GM12878 (cell line): ENCODE measurements at regions of chr6 and their contacts with region 1.

Region 1: DNA sequence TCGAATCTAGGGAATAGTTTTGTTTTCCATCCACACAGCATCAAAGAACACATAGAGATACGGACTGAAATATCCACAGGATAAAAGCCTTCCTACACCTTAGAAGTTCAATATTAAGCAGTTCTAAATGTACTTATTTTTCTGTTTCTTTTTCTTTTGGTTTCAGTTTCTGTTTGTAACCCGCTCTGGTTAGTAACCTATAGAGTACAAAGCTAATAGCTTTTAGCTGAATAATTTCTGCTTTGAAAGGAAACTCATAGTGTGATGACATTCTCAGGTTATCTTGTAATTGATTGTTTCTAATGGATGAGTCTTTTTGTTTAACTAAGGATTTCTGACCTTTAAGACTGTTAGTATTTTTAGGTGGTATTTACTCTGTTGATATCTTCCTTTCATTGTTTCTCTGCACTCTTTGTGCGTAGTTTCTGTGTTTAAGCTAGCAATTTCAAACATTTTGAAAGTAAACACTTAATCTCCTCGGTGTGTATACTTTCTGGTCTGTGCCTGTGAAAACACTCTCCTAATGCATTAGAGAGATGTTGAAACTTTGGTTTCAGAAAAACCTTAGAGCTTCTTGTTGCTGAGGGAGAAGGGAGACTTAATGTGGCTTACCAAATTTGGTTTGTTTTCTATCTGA is 385.5 kb downstream of the HDGFL1 start:
- DNase-seq: no peak
- ATAC-seq: peak; percentile 80
- H3K4me3 ChIP-seq: peak overlapping the region; percentile 41; the same call in 1 of the 2 replicates
- H3K27ac ChIP-seq: peak overlapping the region; percentile 24; the same call in 1 of the 2 replicates
- H3K4me1 ChIP-seq: no peaks in the 10 kb centered on the region
- H3K27me3 ChIP-seq: no peaks in the 10 kb centered on the region
- CTCF ChIP-seq: no peak
- EP300 ChIP-seq: no peak
- POLR2A ChIP-seq: no peak
- RAD21 ChIP-seq: no peak

Region 2: DNA sequence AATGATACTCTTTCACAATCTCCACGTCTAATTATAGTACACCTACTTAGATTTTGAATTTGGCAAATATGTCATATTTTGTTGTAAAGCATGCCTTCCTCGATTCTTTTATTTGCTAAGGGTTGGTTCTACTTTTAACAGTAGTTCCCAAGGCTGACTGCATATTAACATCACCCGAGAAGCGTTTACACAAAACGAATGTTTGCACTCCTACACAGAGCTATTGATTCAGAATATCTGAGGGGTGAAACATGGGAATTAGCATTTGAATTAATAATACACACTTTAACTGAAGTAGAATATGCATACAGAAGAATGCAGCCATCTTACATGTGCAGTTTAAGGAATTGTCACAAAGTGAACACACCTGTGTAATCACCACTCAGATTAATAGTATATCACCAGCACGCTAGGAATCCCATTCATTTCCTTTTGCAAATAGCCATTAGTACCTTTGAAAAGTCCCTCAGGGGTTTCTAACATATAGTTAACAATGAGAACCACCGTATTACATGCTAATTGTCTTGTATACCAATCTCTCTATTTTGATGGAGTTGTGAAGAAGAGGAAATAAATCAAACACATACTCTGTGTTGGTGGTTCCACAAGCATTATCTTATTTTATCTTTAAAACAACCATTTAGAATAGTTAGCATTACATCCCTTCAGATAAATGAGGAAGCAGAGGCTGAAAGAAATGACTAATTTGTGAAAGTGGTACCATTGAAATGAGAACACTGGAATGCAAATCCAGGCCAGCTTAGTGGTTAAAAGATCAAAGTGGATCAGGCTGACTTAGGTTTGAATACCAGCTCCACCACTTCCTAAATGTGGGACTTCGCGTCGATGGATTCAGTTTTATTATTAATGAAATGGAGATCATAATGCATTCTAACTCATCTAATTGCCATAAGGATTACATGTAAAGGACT is 68.0 kb before region 1 on chr6:
- CTCF ChIA-PET with region 1: no interaction called
- POLR2A ChIA-PET with region 1: no interaction called
- RAD21 ChIA-PET with region 1: interaction called, 10 read pairs
- SMC1A ChIA-PET with region 1: interaction called, 5 read pairs
- in situ Hi-C with region 1: no loop called
- intact Hi-C with region 1: no loop called
- DNase-seq: peak; percentile 30
- ATAC-seq: peak; percentile 74
- H3K4me3 ChIP-seq: no peak overlapping the region
- H3K27ac ChIP-seq: no peak overlapping the region
- H3K4me1 ChIP-seq: no peaks in the 10 kb centered on the region
- H3K27me3 ChIP-seq: no peaks in the 10 kb centered on the region
- CTCF ChIP-seq: no peak
- EP300 ChIP-seq: peak; percentile 44 to 86; a peak in 2 of 4 replicates
- POLR2A ChIP-seq: no peak
- RAD21 ChIP-seq: no peak

Region 3: GRCh38 chr6:22966691-22967422 is 12.0 kb after region 1 on chr6:
- CTCF ChIA-PET with region 1: interaction called, 5 read pairs
- POLR2A ChIA-PET with region 1: interaction called, 6 read pairs
- RAD21 ChIA-PET with region 1: interaction called, 5 read pairs
- SMC1A ChIA-PET with region 1: interaction called, 32 read pairs
- in situ Hi-C with region 1: no loop called
- intact Hi-C with region 1: no loop called
- DNase-seq: no peak
- ATAC-seq: no peak
- H3K4me3 ChIP-seq: no peak overlapping the region
- H3K27ac ChIP-seq: no peak overlapping the region
- H3K4me1 ChIP-seq: no peaks in the 10 kb centered on the region
- H3K27me3 ChIP-seq: no peaks in the 10 kb centered on the region
- CTCF ChIP-seq: no peak
- EP300 ChIP-seq: no peak
- POLR2A ChIP-seq: no peak
- RAD21 ChIP-seq: no peak